ENCODE measurements at regions of chr12 and their contacts with region 1.

Region 1: GRCh38 chr12:95998611-95999286 is 2.6 kb upstream of the HAL start:
- DNase-seq: peak; percentile 68
- H3K4me3 ChIP-seq: no peak overlapping the region
- H3K27ac ChIP-seq: no peak overlapping the region
- H3K4me1 ChIP-seq: no peaks in the 10 kb centered on the region
- H3K27me3 ChIP-seq: no peaks in the 10 kb centered on the region
- CTCF ChIP-seq: peak; percentile 56 to 58
- POLR2A ChIP-seq: no peak

Region 2: GRCh38 chr12:95820102-95820703 is 178.5 kb before region 1 on chr12:
- CTCF ChIA-PET with region 1: interaction called, 5 read pairs
- POLR2A ChIA-PET with region 1: no interaction called
- dilution Hi-C with region 1: no loop called
- intact Hi-C with region 1: loop called (anchors 1 kb)
- DNase-seq: peak; percentile 75
- H3K4me3 ChIP-seq: no peak overlapping the region
- H3K27ac ChIP-seq: no peak overlapping the region
- H3K4me1 ChIP-seq: no peaks in the 10 kb centered on the region
- H3K27me3 ChIP-seq: no peaks in the 10 kb centered on the region
- CTCF ChIP-seq: peak; percentile 51 to 61
- POLR2A ChIP-seq: no peak

Region 3: DNA sequence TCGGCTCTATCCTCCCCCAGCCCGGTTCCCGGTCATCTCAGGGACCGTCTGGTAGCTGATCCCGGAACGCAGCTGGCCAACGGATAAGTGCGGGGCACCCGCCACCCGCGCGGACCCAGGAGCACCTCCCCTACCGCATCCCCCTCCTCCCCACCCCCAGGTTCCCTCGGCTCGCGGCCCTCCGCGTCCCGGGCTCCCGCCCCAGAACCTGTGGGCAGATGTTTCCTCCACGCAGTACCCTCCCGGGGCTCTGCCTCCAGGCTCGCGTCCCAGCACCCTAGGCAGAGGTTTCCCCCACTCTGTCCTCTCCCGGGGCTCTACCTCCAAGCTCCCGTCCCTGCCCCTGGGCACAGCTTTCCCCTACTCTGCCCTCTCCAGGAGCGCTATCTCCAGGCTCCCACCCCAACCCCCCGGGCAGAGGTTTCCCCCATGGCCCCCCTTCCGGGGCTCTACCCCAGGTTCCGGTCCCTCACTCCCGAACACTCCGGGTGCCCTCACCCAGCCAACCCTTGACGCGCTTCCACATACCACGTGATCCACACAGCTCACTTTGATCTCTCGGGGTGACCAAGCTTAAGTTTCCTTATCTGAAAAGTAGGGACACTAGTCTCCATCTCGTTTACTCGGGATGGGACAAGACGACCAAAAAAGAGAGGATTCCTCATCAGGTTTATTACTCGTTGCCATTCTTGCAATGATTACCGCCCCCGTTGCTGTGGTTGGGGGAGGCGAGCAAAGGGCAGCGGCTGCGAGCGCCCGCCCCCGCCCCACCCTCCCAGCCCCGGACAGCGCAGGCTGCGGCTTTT is 56.0 kb before region 1 on chr12 and contains the start of gene CCDC38:
- CTCF ChIA-PET with region 1: interaction called, 13 read pairs
- POLR2A ChIA-PET with region 1: no interaction called
- dilution Hi-C with region 1: no loop called
- intact Hi-C with region 1: no loop called
- DNase-seq: no peak
- H3K4me3 ChIP-seq: peak within 1 kb of the TSS; percentile 33 to 64 (median 52)
- H3K27ac ChIP-seq: no peak within 1 kb of the TSS
- H3K4me1 ChIP-seq: peaks cover 4% of the 10 kb centered on the region
- H3K27me3 ChIP-seq: peaks cover 0 to 17% of the 10 kb centered on the region in 2 experiments
- CTCF ChIP-seq: no peak
- POLR2A ChIP-seq: no peak
- total RNA-seq, gene CCDC38: not detected in 2 replicates

Region 4: DNA sequence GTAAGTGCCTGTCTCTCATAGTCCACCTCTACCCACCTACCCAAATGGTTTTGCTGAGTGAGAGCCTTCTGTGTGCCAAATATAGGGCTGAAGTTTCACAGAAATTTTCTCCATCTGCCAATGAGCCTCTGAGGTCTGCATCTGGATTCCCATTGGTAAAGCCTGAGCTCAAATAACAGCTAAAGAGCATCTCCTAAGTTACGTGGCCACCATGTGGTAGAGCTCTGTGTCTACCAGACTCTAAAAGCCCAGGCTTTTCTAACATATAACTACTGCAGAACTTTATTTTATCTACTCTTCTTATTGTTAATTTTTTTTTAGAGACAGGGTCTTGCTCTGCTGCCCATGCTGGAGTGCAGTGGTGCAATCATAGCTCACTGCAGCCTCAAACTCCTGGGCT is 39.6 kb before region 1 on chr12:
- CTCF ChIA-PET with region 1: interaction called, 12 read pairs
- POLR2A ChIA-PET with region 1: no interaction called
- dilution Hi-C with region 1: no loop called
- intact Hi-C with region 1: no loop called
- DNase-seq: peak; percentile 16
- H3K4me3 ChIP-seq: no peak overlapping the region
- H3K27ac ChIP-seq: no peak overlapping the region
- H3K4me1 ChIP-seq: no peaks in the 10 kb centered on the region
- H3K27me3 ChIP-seq: peaks cover 9 to 16% of the 10 kb centered on the region in 2 experiments
- CTCF ChIP-seq: peak in 1 of 2 donors; percentile 3
- POLR2A ChIP-seq: no peak

Region 5: DNA sequence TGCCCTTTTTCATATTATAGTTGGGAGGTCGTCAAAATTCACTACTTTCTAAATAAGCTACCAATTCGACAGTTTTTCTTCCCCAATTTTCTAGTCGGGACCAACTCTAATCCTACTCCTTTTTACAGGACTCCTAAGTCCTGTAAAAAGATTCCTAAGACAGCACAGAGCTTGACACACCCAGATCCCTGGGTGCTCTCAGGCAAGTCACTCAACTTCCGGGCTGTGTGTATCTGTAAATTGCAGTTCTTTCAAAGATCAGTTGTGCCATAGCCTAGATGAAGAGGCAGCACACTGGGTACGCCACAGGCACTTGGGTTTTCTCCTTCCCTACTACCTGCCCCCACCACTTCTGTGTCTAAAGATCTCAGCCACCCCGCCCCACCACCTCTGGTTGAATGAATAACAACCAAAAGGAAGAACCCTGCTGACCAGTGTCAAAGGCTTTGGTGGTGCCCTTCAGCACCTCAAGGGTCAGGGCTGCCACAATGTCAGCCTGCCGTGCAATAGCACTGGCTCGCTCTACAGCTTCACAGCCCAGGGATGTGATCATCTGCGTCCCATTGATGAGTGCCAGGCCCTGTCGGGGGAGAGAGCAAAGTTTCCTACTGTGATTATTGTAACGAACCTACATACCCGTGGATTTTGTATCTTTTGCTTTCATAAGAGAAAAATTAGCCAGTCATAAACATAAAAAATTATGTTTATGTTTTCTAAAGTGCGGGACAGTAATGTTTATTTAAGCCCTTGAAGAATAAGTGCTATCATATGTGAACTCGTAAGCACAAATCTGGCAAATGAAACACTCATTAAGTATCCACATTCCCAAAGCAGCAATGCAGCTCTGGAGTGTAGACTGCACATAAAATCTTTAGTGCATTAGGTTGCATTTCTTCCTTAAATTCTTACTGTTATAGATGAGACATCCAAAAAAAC is 11.8 kb before region 1 on chr12:
- CTCF ChIA-PET with region 1: interaction called, 29 read pairs
- POLR2A ChIA-PET with region 1: no interaction called
- dilution Hi-C with region 1: no loop called
- intact Hi-C with region 1: no loop called
- DNase-seq: no peak
- H3K4me3 ChIP-seq: no peak overlapping the region
- H3K27ac ChIP-seq: no peak overlapping the region
- H3K4me1 ChIP-seq: no peaks in the 10 kb centered on the region
- H3K27me3 ChIP-seq: peaks cover 14 to 26% of the 10 kb centered on the region in 2 experiments
- CTCF ChIP-seq: no peak
- POLR2A ChIP-seq: no peak

Region 6: GRCh38 chr12:96015672-96016071 is 16.9 kb after region 1 on chr12:
- CTCF ChIA-PET with region 1: interaction called, 12 read pairs
- POLR2A ChIA-PET with region 1: no interaction called
- dilution Hi-C with region 1: no loop called
- intact Hi-C with region 1: no loop called
- DNase-seq: peak; percentile 57
- H3K4me3 ChIP-seq: no peak overlapping the region
- H3K27ac ChIP-seq: no peak overlapping the region
- H3K4me1 ChIP-seq: no peaks in the 10 kb centered on the region
- H3K27me3 ChIP-seq: no peaks in the 10 kb centered on the region
- CTCF ChIP-seq: peak; percentile 31 to 64
- POLR2A ChIP-seq: no peak

Region 7: DNA sequence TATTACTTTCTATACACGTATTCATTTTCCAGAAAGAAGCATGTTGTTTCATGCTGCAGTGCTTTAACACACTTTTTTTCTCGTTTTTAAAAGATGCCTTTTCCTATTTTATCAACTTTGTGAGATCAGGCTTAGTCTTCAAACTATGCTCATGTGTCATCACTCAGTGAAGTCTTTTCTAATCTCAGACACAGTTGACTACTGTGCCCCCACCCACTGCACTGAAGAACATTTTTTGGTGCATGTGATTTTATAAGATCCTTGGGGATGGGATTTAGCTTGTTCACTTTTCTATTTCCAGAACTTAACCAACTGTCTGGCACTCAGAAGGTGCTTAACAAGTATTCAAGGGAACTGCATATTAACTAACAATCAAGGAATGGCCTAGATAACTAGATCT is 316.0 kb after region 1 on chr12:
- CTCF ChIA-PET with region 1: no interaction called
- POLR2A ChIA-PET with region 1: no interaction called
- dilution Hi-C with region 1: no loop called
- intact Hi-C with region 1: no loop called
- DNase-seq: no peak
- H3K4me3 ChIP-seq: no peak overlapping the region
- H3K27ac ChIP-seq: no peak overlapping the region
- H3K4me1 ChIP-seq: no peaks in the 10 kb centered on the region
- H3K27me3 ChIP-seq: no peaks in the 10 kb centered on the region
- CTCF ChIP-seq: no peak
- POLR2A ChIP-seq: no peak

Measured in endothelial cell of umbilical vein (primary cell).